ENCODE measurements at regions of chr7 and their contacts with region 1.

Region 1: GRCh38 chr7:26864309-26865093 is at the start of gene SKAP2:
- DNase-seq: peak; percentile 98 to 100
- H3K4me3 ChIP-seq: peak within 1 kb of the TSS; percentile 77
- H3K27ac ChIP-seq: peak within 1 kb of the TSS; percentile 84
- H3K4me1 ChIP-seq: peaks cover 58% of the 10 kb centered on the region
- H3K27me3 ChIP-seq: no peaks in the 10 kb centered on the region
- CTCF ChIP-seq: no peak
- total RNA-seq, gene SKAP2: 59.2 and 74.9 TPM in 2 replicates

Region 2: GRCh38 chr7:26910221-26910620 is 45.7 kb after region 1 on chr7:
- CTCF ChIA-PET with region 1: interaction called, 3 read pairs
- POLR2A ChIA-PET with region 1: no interaction called
- intact Hi-C with region 1: loop called (anchors 2 kb)
- DNase-seq: peak; percentile 87 to 96
- H3K4me3 ChIP-seq: peak overlapping the region; percentile 16; the same call in 1 of the 2 replicates
- H3K27ac ChIP-seq: peak overlapping the region; percentile 79
- H3K4me1 ChIP-seq: peaks cover 47% of the 10 kb centered on the region
- H3K27me3 ChIP-seq: no peaks in the 10 kb centered on the region
- CTCF ChIP-seq: no peak

Region 3: GRCh38 chr7:26918241-26918640 is 53.7 kb after region 1 on chr7:
- CTCF ChIA-PET with region 1: no interaction called
- POLR2A ChIA-PET with region 1: no interaction called
- intact Hi-C with region 1: loop called (anchors 2 kb)
- DNase-seq: peak in 1 of 2 experiments; percentile 91
- H3K4me3 ChIP-seq: no peak overlapping the region
- H3K27ac ChIP-seq: no peak overlapping the region
- H3K4me1 ChIP-seq: peaks cover 12% of the 10 kb centered on the region
- H3K27me3 ChIP-seq: no peaks in the 10 kb centered on the region
- CTCF ChIP-seq: no peak

Region 4: DNA sequence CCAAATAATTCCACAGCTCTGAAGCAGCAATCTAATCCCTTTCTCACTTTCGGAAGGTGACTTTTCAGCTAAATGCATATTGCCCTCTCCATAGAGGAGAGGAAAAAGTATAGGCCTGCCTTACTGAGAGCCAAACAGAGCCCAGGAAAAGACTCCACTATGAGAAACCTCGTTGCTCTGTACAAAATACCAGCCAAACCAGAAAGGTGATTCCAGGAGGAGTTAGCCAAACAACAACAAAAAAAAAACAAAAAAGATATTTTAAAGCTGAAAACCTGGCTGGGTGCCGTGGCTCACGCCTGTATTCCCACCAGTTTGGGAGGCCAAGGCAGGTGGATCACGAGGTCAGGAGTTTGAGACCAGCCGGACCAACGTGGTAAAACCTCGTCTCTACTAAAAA is 160.8 kb after region 1 on chr7:
- CTCF ChIA-PET with region 1: no interaction called
- POLR2A ChIA-PET with region 1: no interaction called
- intact Hi-C with region 1: loop called (anchors 5 kb)
- DNase-seq: peak; percentile 45 to 52
- H3K4me3 ChIP-seq: no peak overlapping the region
- H3K27ac ChIP-seq: no peak overlapping the region
- H3K4me1 ChIP-seq: peaks cover 10% of the 10 kb centered on the region
- H3K27me3 ChIP-seq: no peaks in the 10 kb centered on the region
- CTCF ChIP-seq: no peak

Region 5: DNA sequence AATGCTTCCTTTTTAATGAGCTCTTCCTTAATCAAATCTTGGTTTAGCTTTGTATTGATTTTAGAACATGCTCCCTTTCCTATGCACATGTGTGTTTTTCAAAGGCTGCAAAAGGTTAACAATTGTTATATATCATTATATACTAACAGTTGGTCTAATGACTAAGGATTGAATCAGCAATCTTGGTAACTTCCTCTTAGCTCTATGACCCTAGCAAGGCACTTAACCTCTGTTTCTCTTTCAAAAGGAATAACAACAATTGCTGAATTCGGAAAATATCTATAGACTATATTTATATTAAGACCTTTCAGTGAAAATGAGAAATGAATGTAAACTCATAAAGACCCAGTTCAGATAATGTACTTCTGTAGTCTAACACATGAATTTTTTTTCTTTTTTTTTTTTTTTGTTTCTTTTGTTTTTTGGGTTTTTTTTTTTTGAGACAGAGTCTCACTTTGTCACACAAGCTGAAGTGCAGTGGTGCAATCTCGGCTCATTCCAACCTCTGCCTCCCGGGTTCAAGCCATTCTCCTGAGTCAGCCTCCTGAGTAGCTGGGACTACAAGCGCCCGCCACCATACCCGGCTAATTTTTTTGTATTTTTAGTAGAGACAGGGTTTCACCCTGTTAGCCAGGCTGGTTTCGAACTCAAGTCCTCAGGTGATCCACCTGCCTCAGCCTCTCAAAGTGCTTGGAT is 182.5 kb after region 1 on chr7:
- CTCF ChIA-PET with region 1: no interaction called
- POLR2A ChIA-PET with region 1: no interaction called
- intact Hi-C with region 1: loop called (anchors 5 kb)
- DNase-seq: peak; percentile 48 to 91
- H3K4me3 ChIP-seq: peak overlapping the region; percentile 33; the same call in 1 of the 2 replicates
- H3K27ac ChIP-seq: peak overlapping the region; percentile 90
- H3K4me1 ChIP-seq: peaks cover 21% of the 10 kb centered on the region
- H3K27me3 ChIP-seq: no peaks in the 10 kb centered on the region
- CTCF ChIP-seq: no peak

Region 6: DNA sequence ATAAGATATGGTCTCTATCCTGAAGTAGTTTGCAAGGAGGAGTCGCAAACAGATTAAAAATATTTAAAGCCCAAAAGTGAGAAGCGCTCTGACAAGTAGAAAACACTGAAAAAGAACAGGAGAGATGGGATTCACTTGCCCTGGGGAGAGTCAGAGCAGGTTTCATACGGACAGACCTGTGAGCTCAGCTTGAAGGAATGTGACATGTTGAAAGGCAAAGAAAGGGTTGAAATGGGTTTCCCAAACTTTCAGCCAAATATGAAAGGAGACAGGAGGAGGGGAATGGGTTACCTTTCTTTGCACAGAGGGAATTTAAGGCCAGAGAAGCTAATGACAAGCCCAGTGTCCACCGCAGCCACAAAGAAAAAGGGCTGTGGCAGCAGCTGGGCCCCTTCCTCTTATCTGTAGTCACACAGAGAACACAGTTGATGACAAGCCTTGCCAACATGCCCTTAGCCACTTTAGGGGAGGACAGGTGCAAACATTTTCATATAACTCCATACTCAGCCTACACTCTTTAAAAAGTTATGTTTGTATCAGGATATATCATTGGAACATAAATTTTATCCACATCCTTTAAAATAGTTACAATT is 216.4 kb after region 1 on chr7:
- CTCF ChIA-PET with region 1: no interaction called
- POLR2A ChIA-PET with region 1: no interaction called
- intact Hi-C with region 1: loop called (anchors 1 kb)
- DNase-seq: peak; percentile 59 to 94
- H3K4me3 ChIP-seq: peak overlapping the region; percentile 12; the same call in 1 of the 2 replicates
- H3K27ac ChIP-seq: peak overlapping the region; percentile 84
- H3K4me1 ChIP-seq: peaks cover 55% of the 10 kb centered on the region
- H3K27me3 ChIP-seq: no peaks in the 10 kb centered on the region
- CTCF ChIP-seq: no peak